ENCODE measurements at regions of chr16 and their contacts with region 1.

Region 1: GRCh38 chr16:30065143-30065850 is at the start of gene ALDOA:
- DNase-seq: peak; percentile 94 to 96
- ATAC-seq: peak; percentile 80 to 94 (median 84)
- H3K4me3 ChIP-seq: peak within 1 kb of the TSS; percentile 96
- H3K4me3 Mint-ChIP-seq: peak within 1 kb of the TSS; percentile 98
- H3K27ac ChIP-seq: peak within 1 kb of the TSS; percentile 79
- H3K27ac Mint-ChIP-seq: peak within 1 kb of the TSS; percentile 94 to 98
- H3K4me1 ChIP-seq: peaks cover 42% of the 10 kb centered on the region
- H3K4me1 Mint-ChIP-seq: peaks cover 36 to 56% of the 10 kb centered on the region in 2 donors
- H3K27me3 ChIP-seq: no peaks in the 10 kb centered on the region
- H3K27me3 Mint-ChIP-seq: no peaks in the 10 kb centered on the region
- CTCF ChIP-seq: no peak
- total RNA-seq, gene ALDOA: 412 to 544 (median 490) TPM

Region 2: GRCh38 chr16:30075507-30076275 is 10.4 kb after region 1 on chr16 and contains the start of gene PPP4C:
- intact Hi-C with region 1: loop called (anchors 1 kb)
- DNase-seq: peak; percentile 91 to 94
- ATAC-seq: peak; percentile 87 to 92 (median 89)
- H3K4me3 ChIP-seq: peak within 1 kb of the TSS; percentile 89
- H3K4me3 Mint-ChIP-seq: peak within 1 kb of the TSS; percentile 98
- H3K27ac ChIP-seq: peak within 1 kb of the TSS; percentile 83
- H3K27ac Mint-ChIP-seq: peak within 1 kb of the TSS; percentile 94 to 95
- H3K4me1 ChIP-seq: peaks cover 37% of the 10 kb centered on the region
- H3K4me1 Mint-ChIP-seq: peaks cover 22 to 47% of the 10 kb centered on the region in 2 donors
- H3K27me3 ChIP-seq: no peaks in the 10 kb centered on the region
- H3K27me3 Mint-ChIP-seq: no peaks in the 10 kb centered on the region
- CTCF ChIP-seq: no peak
- total RNA-seq, gene PPP4C: 119 to 132 (median 130) TPM

Region 3: DNA sequence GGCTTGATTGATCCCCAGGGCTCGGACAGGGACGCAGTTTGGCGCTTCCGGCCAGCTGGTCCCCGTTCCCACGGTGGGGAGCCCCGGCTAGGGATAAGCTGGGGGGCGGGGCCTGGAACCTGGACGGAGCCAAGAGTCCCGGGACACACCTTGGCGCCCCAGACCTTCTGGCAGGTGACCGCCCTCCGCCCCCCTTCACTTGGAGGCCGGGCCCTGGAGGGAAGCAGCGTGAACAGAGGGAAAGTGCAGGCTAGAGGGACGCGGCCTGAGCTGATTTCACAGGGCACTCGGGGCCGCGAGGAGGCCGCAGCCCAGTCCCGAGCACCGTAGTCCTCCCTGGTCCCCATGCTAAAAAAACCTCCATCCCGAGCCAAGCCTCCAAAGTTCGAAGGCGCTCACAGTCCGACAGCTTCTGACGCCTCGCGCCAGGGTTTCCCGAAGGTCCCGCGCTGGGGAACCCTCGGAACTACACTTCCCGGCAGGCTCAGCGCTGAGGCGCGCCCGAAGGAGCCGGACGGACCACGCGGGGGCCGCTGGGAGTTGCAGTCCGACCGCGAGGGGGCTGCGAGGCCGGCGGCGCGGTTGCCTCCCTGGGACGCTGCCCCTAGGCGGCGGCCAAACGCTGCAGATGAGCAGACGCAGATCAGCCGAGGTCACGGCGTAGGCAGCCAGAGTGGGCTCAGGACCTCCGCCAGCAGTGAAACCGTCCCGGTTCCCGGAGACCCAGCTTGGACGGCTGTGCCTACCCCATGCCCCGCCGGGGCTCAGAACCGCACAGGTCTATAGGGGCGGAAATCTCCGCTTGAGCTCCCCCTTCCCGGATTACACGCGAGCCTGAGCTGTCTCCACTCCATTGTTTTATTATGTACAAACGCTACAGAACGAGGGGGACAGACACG is 26.4 kb after region 1 on chr16 and contains the start of gene TBX6:
- intact Hi-C with region 1: loop called (anchors 1 kb)
- DNase-seq: peak; percentile 93 to 96
- ATAC-seq: peak; percentile 85 to 93 (median 86)
- H3K4me3 ChIP-seq: peak within 1 kb of the TSS; percentile 65
- H3K4me3 Mint-ChIP-seq: peak within 1 kb of the TSS; percentile 88
- H3K27ac ChIP-seq: peak within 1 kb of the TSS; percentile 69
- H3K27ac Mint-ChIP-seq: peak within 1 kb of the TSS; percentile 91 to 93
- H3K4me1 ChIP-seq: peaks cover 53% of the 10 kb centered on the region
- H3K4me1 Mint-ChIP-seq: peaks cover 28 to 44% of the 10 kb centered on the region in 2 donors
- H3K27me3 ChIP-seq: no peaks in the 10 kb centered on the region
- H3K27me3 Mint-ChIP-seq: no peaks in the 10 kb centered on the region
- CTCF ChIP-seq: peak; percentile 78
- total RNA-seq, gene TBX6: 0.91 to 1.1 (median 0.98) TPM

Region 4: DNA sequence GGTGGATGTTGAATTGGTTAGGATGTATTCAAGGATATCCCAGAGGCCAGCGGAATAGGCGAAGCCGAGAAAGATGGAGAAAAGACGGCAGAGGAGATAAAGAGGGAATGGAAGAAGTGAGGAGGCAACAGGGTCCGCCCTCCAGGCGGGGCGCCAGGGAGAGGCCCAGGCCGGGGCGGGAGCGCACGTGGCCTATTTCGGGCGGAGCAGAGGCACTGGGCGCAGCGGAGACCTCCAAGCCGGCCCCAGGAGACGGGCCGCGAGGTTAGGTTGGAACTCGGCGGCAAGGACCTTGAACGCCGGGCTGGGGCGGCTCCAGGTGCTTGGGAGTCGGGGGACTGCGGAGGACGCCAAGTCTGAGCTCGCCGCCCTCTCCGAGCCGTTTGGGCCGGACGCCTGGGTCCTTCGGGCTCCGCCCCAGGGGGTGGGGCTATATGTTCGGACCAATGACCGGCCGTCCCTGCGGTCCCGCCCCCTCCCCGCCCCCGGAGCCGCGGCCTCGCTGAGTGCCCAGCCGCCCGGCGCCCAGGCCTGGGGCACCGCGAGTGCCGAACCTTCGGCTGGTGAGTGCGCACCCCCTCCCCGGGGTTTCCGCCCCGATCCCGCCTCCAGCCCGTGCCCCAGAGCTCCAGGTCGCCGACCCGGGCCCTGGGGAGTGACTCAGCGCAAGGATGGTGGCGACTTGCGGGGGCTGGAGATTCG is 342.0 kb after region 1 on chr16 and contains the start of gene ZNF771:
- intact Hi-C with region 1: loop called (anchors 10 kb)
- DNase-seq: peak; percentile 84 to 92
- ATAC-seq: peak; percentile 90 to 96 (median 92)
- H3K4me3 ChIP-seq: peak within 1 kb of the TSS; percentile 69
- H3K4me3 Mint-ChIP-seq: peak within 1 kb of the TSS; percentile 94
- H3K27ac ChIP-seq: peak within 1 kb of the TSS; percentile 18
- H3K27ac Mint-ChIP-seq: peak within 1 kb of the TSS; percentile 76 to 85
- H3K4me1 ChIP-seq: peaks cover 24% of the 10 kb centered on the region
- H3K4me1 Mint-ChIP-seq: peaks cover 15 to 20% of the 10 kb centered on the region in 2 donors
- H3K27me3 ChIP-seq: peaks cover 3% of the 10 kb centered on the region
- H3K27me3 Mint-ChIP-seq: peaks cover 0 to 2% of the 10 kb centered on the region in 2 donors
- CTCF ChIP-seq: no peak
- total RNA-seq, gene ZNF771: 0.70 to 1.4 (median 1.4) TPM